ENCODE measurements at regions of chr1 and their contacts with region 1.

Region 1: GRCh38 chr1:153946622-153947241 is at the start of gene DENND4B:
- DNase-seq: peak; percentile 74
- ATAC-seq: peak; percentile 54
- H3K4me3 Mint-ChIP-seq: peak within 1 kb of the TSS; percentile 90
- H3K27ac Mint-ChIP-seq: peak within 1 kb of the TSS; percentile 96
- H3K4me1 Mint-ChIP-seq: peaks cover 71% of the 10 kb centered on the region
- H3K27me3 Mint-ChIP-seq: no peaks in the 10 kb centered on the region
- CTCF ChIP-seq: no peak
- total RNA-seq, gene DENND4B: 217 and 257 TPM in 2 replicates

Region 2: GRCh38 chr1:153494976-153495535 is 451.7 kb before region 1 on chr1:
- CTCF ChIA-PET with region 1: no interaction called
- POLR2A ChIA-PET with region 1: no interaction called
- intact Hi-C with region 1: no loop called
- DNase-seq: peak; percentile 69
- ATAC-seq: peak; percentile 89
- H3K4me3 Mint-ChIP-seq: no peak overlapping the region
- H3K27ac Mint-ChIP-seq: peak overlapping the region; percentile 39
- H3K4me1 Mint-ChIP-seq: peaks cover 11% of the 10 kb centered on the region
- H3K27me3 Mint-ChIP-seq: peaks cover 22% of the 10 kb centered on the region
- CTCF ChIP-seq: peak; percentile 74

Region 3: GRCh38 chr1:153783233-153784190 is 163.2 kb before region 1 on chr1:
- CTCF ChIA-PET with region 1: no interaction called
- POLR2A ChIA-PET with region 1: interaction called, 25 read pairs
- intact Hi-C with region 1: no loop called
- DNase-seq: peak; percentile 92
- ATAC-seq: peak; percentile 96
- H3K4me3 Mint-ChIP-seq: peak overlapping the region; percentile 93
- H3K27ac Mint-ChIP-seq: peak overlapping the region; percentile 96
- H3K4me1 Mint-ChIP-seq: peaks cover 25% of the 10 kb centered on the region
- H3K27me3 Mint-ChIP-seq: no peaks in the 10 kb centered on the region
- CTCF ChIP-seq: no peak

Region 4: GRCh38 chr1:153805042-153805745 is 141.5 kb before region 1 on chr1:
- CTCF ChIA-PET with region 1: interaction called, 4 read pairs
- POLR2A ChIA-PET with region 1: interaction called, 19 read pairs
- intact Hi-C with region 1: no loop called
- DNase-seq: no peak
- ATAC-seq: peak; percentile 98
- H3K4me3 Mint-ChIP-seq: peak overlapping the region; percentile 42
- H3K27ac Mint-ChIP-seq: peak overlapping the region; percentile 83
- H3K4me1 Mint-ChIP-seq: peaks cover 34% of the 10 kb centered on the region
- H3K27me3 Mint-ChIP-seq: no peaks in the 10 kb centered on the region
- CTCF ChIP-seq: no peak

Region 5: GRCh38 chr1:153849487-153850185 is 97.1 kb before region 1 on chr1:
- CTCF ChIA-PET with region 1: no interaction called
- POLR2A ChIA-PET with region 1: interaction called, 13 read pairs
- intact Hi-C with region 1: no loop called
- DNase-seq: no peak
- ATAC-seq: peak; percentile 83
- H3K4me3 Mint-ChIP-seq: peak overlapping the region; percentile 39
- H3K27ac Mint-ChIP-seq: peak overlapping the region; percentile 63
- H3K4me1 Mint-ChIP-seq: peaks cover 62% of the 10 kb centered on the region
- H3K27me3 Mint-ChIP-seq: no peaks in the 10 kb centered on the region
- CTCF ChIP-seq: no peak

Region 6: GRCh38 chr1:153928791-153929341 is 17.9 kb before region 1 on chr1:
- CTCF ChIA-PET with region 1: interaction called, 7 read pairs
- POLR2A ChIA-PET with region 1: interaction called, 186 read pairs
- intact Hi-C with region 1: no loop called
- DNase-seq: no peak
- ATAC-seq: no peak
- H3K4me3 Mint-ChIP-seq: no peak overlapping the region
- H3K27ac Mint-ChIP-seq: peak overlapping the region; percentile 24
- H3K4me1 Mint-ChIP-seq: peaks cover 6% of the 10 kb centered on the region
- H3K27me3 Mint-ChIP-seq: no peaks in the 10 kb centered on the region
- CTCF ChIP-seq: no peak

Region 7: DNA sequence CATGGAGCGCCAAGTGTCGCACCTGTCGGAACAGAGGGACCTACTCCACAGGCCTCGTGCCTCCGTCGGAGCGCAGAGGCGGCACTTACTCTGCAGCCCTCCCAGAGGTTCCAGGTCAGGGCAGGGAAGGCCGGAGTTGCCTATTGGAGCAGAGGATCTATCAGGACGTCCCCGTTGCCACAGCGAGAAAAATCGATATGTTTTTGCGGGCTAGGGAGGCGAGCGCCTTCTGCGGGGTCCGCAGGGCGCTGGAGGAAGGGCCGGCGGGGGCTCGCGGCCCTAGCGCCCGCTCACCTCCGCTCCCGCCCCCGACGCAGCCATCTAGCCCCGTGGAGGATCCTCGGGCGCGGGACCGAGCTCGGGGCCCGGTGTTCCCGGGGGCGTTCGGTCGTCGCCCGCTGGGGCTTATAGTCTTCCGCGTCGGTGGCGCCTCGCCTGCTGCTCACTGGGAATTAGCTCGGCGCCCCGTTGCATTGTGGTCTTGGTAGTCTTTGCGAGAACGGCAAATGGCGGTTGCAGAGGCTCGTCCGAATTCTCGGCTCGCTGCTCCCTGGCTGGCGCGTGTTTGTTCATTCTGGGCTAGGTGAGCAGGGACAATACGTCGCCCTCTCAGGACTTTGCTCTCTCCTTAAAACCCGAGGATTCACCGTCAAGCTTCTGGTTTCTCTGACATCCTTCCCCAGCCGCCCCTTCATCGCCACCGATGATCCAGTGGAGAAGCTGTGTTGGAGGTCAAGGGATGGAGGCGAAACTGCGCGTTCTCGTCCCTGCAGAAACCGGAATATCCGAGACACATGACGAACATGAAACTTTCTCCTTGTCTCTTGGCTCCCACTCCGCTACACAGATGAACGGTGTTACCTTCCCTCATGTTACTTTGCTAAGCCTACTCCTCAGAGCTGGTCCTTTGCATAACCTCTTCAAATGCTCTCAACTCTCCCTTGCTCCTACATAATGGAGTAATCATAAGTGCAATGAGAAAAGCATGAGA is 30.8 kb after region 1 on chr1 and contains the start of gene JTB:
- CTCF ChIA-PET with region 1: interaction called, 8 read pairs
- POLR2A ChIA-PET with region 1: interaction called, 87 read pairs
- intact Hi-C with region 1: no loop called
- DNase-seq: peak; percentile 72
- ATAC-seq: peak; percentile 97
- H3K4me3 Mint-ChIP-seq: peak within 1 kb of the TSS; percentile 98
- H3K27ac Mint-ChIP-seq: peak within 1 kb of the TSS; percentile 97
- H3K4me1 Mint-ChIP-seq: peaks cover 32% of the 10 kb centered on the region
- H3K27me3 Mint-ChIP-seq: no peaks in the 10 kb centered on the region
- CTCF ChIP-seq: no peak
- total RNA-seq, gene JTB: 137 and 147 TPM in 2 replicates

Region 8: DNA sequence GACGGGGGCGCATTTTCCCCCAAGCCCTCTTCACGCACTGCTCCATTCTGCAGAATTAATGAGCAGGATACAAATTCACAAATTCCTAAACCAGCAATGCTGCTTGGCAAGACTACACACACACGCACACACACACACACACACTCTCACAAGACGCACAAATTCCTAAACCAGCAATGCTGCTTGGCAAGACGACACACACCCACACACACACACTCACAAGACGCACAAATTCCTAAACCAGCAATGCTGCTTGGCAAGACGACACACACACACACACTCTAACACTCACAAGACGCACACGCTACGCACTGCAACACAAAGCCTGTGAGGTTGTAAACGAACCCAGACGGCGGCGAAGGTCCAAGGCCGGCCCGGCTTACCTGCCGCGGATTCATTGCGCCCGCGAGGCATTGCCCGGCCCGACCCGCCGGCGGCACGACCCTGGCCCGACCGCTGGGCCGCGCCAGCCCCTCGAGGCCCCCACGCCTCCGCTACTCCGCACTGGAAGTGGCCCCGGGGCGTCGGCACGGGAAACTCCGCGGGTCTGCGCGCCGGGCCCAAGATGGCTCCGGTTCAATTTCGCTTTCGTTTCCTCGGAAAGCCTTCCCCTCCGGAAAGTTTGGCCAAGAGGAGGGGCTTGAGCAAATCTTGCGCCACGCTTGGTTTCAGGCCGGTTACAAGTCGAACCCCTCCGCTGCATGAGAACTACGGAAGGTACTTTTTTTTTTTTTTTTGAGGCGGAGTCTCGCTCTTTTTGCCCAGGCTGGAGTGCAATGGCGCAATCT is 661.1 kb after region 1 on chr1 and contains the start of gene ADAR:
- CTCF ChIA-PET with region 1: no interaction called
- POLR2A ChIA-PET with region 1: no interaction called
- intact Hi-C with region 1: loop called (anchors 5 kb)
- DNase-seq: peak; percentile 80
- ATAC-seq: peak; percentile 91
- H3K4me3 Mint-ChIP-seq: peak within 1 kb of the TSS; percentile 89
- H3K27ac Mint-ChIP-seq: peak within 1 kb of the TSS; percentile 90
- H3K4me1 Mint-ChIP-seq: peaks cover 73% of the 10 kb centered on the region
- H3K27me3 Mint-ChIP-seq: no peaks in the 10 kb centered on the region
- CTCF ChIP-seq: no peak
- total RNA-seq, gene ADAR: 209 and 216 TPM in 2 replicates

Measured in activated B cell treated with CpG ODN at 0.5 μM for 24 hours (primary cell).